Right ventricle myocardium inferior (tissue), 1 donor: ENCODE measurements at regions of chr14 and their contacts with region 1.

Region 1: DNA sequence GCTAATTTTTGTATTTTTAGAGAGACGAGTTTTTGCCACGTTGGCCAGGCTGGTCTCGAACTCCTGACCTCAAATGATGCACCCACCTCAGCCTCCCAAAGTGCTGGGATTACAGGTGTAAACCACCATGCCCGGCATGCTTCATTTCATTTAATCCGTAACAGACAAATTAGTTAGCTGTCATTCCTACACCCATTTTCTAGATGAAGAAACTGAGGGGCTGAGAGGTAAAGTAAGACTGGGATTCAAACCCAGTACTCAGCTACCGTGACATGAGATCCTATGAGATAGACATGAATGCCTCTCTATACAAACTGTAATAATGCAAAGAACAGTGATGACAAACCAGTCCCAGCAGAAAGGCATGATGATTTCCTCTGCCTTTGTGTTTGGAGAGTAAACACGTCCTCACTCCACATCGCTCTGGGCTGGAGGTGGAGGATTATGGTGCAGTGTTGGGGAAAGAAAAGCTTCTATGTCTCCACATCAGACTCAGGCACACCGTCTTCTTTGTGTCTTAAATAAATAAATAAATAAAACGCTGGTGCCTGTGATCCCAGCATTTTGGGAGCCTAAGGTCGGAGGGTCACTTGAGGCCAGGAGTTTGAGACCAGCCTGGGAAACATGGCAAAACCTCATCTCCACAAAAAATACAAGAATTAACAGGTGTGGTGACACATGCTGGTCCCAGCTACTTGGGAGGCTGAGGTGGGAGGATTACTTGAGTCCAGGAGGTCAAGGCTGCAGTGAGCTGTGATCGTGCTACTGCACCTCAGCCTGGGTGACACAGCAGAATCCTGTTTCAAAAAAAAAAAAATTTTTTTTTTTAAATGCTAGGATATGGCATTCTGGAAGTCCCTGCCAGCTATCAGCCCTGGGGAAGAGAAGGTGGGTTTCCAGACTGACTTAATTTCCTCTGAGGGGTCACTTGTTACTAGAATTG is 10.5 kb downstream of the VSX2 start:
- DNase-seq: no peak
- ATAC-seq: no peak

Region 2: DNA sequence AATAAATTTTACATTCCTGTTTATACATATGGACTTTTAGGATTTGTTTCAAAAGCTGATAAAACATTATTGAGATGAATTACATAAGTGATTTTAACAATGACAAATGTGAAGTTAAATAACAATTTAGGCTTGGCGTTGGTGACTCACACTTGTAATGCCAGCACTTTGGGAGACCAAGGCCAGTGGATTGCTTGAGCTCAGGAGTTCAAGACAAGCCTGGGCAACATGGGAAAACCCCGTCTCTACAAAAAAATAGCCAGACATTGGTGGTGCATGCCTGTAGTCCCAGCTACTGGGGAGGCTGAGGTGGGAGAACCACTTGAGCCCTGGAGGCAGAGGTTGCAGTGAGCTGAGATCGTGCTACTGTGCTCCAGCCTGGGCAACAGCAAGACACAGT is 673.3 kb before region 1 on chr14:
- intact Hi-C with region 1: no loop called
- DNase-seq: no peak
- ATAC-seq: no peak

Region 3: DNA sequence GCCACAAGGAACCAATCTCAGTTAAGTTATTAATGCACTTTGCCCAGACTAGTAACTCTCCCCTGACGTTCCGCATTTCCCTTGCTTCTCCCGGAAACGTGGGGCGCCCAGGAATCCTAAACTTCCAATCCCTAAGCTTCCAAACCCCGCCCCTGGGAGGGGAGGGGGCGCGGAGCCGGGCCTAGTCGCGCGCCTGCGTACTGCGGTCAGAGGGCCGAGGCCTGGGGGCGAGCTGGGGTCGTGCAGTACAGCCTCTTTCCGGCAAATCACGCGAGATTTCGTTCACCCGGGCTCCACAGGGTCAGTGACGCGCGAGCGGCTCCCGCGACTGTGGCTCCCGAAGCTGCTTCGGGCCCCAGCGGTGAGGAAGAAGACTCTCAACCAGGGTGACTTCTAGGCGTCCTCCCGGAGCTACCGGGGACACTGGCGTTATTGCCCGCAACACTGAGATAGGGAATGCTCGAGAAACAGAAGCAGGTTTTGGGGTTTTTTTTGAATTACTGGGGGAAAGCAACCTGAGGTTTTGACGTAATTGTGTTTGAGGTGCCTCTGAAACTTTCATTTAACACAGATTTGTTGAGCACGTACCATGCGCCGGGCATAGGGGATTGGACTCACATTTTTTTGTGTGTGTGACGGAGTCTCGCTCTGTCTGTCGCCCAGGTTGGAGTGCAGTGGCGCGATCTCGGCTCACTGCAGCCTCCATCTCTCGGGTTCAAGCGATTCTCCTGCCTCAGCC is 397.9 kb before region 1 on chr14 and contains the start of gene PTGR2:
- intact Hi-C with region 1: no loop called
- DNase-seq: peak; percentile 96
- ATAC-seq: peak; percentile 99
- total RNA-seq, gene PTGR2: 32.8 TPM

Region 4: DNA sequence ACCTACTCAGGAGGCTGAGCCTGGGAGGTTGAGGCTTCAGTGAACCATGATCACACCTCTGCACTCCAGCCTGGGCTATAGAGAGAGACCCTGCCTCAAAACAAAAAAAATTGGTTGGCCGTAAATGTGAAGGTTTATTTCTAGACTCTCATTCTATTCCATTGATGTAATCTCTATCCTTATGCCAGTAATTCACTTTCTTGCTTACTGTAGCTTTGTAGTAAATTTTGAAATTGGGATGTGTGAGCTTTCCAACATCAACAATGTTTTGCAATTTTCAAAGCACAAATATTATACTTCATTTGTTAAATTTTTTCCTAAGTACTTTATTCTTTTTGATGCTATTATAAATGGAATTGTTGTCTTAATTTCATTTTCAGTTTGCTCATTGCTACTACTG is 140.3 kb before region 1 on chr14:
- intact Hi-C with region 1: loop called (anchors 1 kb)
- DNase-seq: no peak
- ATAC-seq: no peak

Region 5: DNA sequence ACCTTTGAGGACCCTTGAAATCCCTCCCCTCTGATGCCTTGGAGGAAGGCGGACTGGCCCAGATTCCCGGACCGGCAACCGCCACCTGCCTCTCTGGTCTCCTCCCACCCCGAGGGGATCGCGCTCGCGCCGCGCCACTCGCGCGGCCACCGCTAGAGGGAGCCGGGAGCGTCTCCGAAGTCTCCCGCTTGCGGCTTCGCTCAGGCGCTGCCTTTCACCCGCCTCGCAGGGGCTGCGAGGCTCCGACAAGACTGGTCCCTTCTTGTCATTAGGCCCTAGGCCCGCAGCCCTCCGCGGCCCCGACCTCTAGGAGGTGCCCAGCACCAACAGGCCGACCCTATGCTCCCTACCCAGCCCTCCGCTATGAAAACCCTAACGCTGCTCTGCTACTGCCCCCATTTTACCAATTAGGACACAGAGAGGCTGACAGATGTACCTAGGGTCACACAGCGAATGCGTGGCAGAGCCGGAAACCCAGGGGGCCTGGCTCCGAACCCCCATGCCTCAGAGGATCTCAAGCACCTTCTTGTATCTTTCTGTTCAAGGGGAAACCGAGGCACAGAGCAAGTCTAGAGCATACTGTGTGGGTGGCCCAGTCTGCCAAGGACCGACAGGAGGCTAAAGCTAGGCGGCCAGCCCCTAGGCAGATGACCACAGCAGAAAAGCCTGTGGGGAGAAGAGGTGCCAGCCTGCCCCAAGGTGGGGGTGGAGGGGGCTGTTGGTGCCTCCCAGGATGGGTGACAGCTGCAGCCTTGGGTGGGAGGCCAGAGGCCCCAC is 31.8 kb before region 1 on chr14:
- intact Hi-C with region 1: loop called (anchors 5 kb)
- DNase-seq: peak; percentile 80
- ATAC-seq: peak; percentile 85

Region 6: DNA sequence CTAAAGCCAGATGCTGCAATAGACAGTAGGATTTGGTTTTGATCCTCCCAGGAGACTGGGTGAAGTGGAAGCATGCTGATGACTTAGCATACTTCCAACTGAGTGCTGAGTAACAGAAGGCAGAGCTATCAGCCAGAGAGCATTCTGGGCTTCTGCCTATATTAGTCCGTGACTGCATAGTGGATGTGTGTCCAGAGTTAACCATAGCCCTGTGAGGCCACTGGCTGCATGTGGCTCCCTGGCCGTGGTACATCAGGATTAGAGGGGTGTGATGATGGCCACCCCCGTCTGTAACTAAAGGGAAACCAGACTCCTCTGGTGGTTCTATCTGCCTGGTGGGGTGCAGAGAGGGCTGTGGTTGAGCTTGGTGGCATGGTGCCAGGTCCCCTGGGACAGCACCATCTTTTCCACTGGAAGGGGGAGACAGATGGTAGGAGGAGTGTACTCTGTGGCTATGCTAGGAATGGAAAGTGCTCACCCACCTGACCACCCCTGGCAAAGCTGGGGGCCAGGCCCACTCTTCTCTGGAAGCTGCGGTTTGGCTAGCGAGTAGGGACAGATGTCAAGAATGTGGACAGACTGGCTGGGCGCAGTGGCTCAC is 25.6 kb after region 1 on chr14:
- intact Hi-C with region 1: no loop called
- DNase-seq: no peak
- ATAC-seq: peak; percentile 84